Endothelial cell of umbilical vein (primary cell): ENCODE measurements at regions of chr1 and their contacts with region 1.

Region 1: DNA sequence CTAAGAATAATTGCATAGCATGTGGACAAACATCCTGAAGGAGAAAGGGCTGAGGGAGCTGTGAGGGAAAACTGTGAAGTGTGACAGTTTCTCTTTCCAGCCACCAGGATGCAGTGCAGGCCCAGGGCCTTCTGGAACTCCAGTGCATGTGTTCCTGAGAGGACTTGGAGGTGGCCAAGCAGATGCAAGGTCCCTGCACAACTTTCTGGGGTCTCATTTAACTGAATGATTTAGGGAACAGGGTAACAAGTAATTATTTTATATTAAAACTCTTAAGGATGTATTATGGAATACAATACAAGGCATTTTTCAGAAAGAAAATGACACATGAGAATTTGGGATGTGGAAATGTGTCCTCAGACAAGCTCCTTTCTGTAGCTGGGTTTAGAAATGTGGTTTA is 61.2 kb upstream of the MCOLN3 start:
- DNase-seq: peak; percentile 71
- H3K4me3 ChIP-seq: no peak overlapping the region
- H3K27ac ChIP-seq: no peak overlapping the region
- H3K4me1 ChIP-seq: no peaks in the 10 kb centered on the region
- H3K27me3 ChIP-seq: peaks cover 8 to 23% of the 10 kb centered on the region in 2 experiments
- CTCF ChIP-seq: peak; percentile 65 to 80
- POLR2A ChIP-seq: no peak

Region 2: GRCh38 chr1:85230305-85230980 is 121.0 kb after region 1 on chr1:
- CTCF ChIA-PET with region 1: interaction called, 14 read pairs
- POLR2A ChIA-PET with region 1: no interaction called
- dilution Hi-C with region 1: no loop called
- intact Hi-C with region 1: no loop called
- DNase-seq: no peak
- H3K4me3 ChIP-seq: no peak overlapping the region
- H3K27ac ChIP-seq: no peak overlapping the region
- H3K4me1 ChIP-seq: no peaks in the 10 kb centered on the region
- H3K27me3 ChIP-seq: peaks cover 3 to 9% of the 10 kb centered on the region in 2 experiments
- CTCF ChIP-seq: peak; percentile 15 to 31
- POLR2A ChIP-seq: no peak